ENCODE measurements at regions of chr11 and their contacts with region 1.

Region 1: DNA sequence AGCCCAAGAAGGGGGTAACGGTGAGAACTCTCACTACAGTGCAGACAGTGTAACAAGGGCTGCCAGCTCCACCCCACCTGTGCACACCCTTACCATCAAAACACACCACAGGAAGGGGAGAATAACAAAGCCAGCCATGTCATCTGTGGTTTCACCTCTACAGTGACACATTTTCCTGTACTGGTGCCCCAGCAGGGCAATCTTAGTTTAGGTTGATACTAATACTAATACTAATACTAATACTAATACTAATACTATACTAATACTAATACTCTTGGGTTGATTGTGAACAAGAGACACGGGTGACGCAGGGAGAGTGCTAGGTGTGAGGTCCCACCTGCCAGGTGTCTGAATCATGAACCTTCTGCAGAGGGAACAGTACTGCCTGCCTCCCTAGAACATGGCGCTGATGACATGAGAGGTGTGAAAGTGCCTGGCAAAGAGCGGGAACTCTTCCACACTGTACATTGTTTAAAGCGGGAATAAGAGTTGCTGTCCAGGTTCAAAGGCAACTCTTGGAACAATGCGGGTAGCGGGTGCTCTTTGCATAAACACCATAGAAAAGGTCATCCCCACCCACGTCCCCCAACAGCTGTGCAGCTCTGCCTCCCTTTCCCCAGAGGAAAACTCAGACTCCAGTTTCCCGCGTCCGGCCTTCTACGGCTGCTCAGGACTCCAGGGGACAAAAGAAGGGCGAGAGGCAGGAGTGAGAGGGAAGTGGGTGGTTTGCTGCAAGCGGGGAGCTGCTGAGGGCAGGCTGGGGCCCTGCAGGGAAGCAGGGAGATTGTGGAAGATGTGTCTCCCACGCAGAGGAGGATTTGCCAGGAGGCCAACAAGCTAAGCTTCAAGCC is 25.0 kb upstream of the TMPRSS4 start:
- DNase-seq: no peak
- ATAC-seq: peak; percentile 26
- H3K4me3 ChIP-seq: no peak overlapping the region
- H3K27ac ChIP-seq: no peak overlapping the region
- H3K4me1 ChIP-seq: peaks cover 4% of the 10 kb centered on the region
- H3K27me3 ChIP-seq: no peaks in the 10 kb centered on the region
- CTCF ChIP-seq: no peak

Region 2: DNA sequence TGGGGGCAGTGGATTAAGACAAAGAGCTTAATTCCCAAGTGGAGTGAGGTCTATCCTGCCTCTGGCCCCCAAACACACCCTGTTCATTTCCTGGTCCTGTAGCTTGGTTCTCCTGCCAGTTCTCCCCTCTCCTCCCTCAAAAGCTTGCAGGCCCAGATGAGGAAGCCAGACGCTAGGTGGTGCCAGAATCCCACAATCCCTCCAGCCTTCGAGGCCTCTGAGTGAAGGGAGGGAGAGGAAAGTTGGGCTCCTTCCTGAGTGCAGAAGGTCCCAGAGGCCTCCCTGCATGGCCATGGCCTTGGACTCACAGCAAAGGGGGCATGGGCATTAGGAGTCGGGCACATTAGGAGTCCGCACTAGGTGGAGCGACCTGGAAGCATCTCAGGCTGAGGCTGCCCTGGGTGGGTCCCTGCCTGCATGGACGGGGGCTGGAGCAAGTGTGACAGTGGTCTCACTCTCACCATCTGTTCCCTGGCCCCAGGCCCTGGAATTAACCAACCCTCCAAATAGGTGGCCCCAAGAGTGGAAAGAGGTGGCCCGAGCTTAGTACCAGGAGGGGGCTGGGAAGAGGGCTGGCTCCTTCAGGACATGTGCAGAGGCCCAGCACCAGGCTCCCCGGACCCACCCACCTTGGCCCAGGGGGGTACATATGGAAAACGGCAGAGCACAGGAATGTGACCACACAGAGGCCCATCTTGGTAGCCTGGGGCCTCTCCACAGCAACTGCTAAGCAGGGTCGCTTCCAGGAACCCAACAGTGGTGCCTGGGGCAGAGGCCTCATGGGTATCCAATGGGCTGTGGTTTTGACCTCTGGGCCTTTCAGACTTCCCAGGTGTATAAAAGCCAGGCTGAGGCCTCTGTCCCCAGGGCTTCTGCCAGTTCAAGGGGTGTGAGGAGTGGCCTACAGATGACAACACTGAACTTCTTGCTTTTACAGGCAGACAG is 232.5 kb before region 1 on chr11:
- intact Hi-C with region 1: loop called (anchors 10 kb)
- DNase-seq: no peak
- ATAC-seq: peak; percentile 42
- H3K4me3 ChIP-seq: no peak overlapping the region
- H3K27ac ChIP-seq: no peak overlapping the region
- H3K4me1 ChIP-seq: peaks cover 61% of the 10 kb centered on the region
- H3K27me3 ChIP-seq: no peaks in the 10 kb centered on the region
- CTCF ChIP-seq: peak; percentile 50

Region 3: GRCh38 chr11:117946842-117947526 is 104.9 kb before region 1 on chr11:
- intact Hi-C with region 1: loop called (anchors 10 kb)
- DNase-seq: peak; percentile 92
- ATAC-seq: peak; percentile 98
- H3K4me3 ChIP-seq: no peak overlapping the region
- H3K27ac ChIP-seq: no peak overlapping the region
- H3K4me1 ChIP-seq: peaks cover 19% of the 10 kb centered on the region
- H3K27me3 ChIP-seq: no peaks in the 10 kb centered on the region
- CTCF ChIP-seq: peak; percentile 99